Activated B cell treated with CpG ODN at 0.5 μM for 24 hours (primary cell): ENCODE measurements at regions of chr10 and their contacts with region 1.

Region 1: DNA sequence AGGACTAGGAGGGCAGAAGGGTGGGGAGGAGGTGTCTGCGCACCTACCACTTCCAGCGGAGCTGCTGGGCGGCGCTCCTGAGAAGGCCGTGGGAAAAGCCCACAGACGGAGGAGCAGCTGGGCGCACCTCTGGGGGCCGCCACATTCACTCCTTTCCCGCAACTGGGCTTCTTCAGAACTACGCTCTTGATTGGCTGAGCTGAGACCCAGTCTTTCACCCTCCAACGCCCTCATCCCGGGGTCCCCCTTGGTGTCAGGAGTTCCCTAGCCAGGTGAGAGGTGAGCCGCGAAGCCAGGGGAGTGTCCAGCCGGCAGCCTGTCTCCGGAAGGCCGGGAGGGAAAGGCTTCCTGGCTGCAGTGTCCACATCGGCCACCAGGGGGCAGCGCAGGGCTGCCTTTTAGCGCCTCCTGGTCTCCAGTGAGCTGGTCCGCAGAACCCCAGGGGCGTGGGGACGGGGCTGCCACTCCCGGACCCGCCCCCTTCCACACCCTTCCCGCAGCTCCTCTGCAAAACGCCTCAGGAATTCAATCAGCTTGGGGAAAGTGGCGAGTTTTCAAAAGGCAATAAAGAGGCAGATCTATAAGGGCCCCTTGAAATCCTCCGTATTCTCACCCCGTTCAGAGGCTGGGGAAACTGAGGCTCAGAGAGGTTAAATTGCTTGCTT is 98.8 kb downstream of the CHST15 start:
- DNase-seq: peak; percentile 89
- ATAC-seq: peak; percentile 85
- H3K4me3 Mint-ChIP-seq: peak overlapping the region; percentile 73
- H3K27ac Mint-ChIP-seq: no peak overlapping the region
- H3K4me1 Mint-ChIP-seq: peaks cover 42% of the 10 kb centered on the region
- H3K27me3 Mint-ChIP-seq: peaks cover 38% of the 10 kb centered on the region
- CTCF ChIP-seq: peak; percentile 91

Region 2: DNA sequence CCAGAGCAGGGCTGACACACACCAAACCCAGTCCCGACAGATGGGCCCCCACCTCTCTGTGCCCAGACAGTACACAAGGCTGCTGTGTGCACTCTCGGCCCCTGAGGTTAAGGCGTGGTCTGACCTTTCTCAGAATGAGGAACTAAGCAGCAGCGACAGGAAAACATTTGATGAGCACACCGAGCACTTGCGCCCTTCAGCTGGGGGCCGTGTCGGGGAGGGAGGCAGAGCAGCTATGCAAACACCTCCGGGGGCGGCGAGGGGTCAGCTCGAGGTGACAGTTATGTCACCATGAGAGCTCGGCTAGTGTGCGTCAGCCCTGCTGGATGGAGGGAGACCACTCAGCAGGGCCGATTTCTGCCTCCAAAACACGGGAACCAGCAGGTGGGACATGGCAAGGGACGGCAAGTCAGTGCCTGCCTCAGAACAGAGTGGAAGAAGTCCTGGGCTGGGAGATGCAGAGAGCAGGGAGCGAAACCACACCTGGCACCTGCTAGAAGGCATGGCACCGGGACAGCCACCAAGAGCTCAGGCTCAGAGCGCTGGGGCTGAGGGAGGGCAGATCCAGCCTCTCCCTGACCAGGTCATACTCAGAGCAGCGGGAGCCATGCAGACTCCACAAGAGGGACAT is 41.5 kb after region 1 on chr10:
- CTCF ChIA-PET with region 1: interaction called, 6 read pairs
- POLR2A ChIA-PET with region 1: no interaction called
- intact Hi-C with region 1: loop called (anchors 2 kb)
- DNase-seq: peak; percentile 75
- ATAC-seq: peak; percentile 93
- H3K4me3 Mint-ChIP-seq: peak overlapping the region; percentile 85
- H3K27ac Mint-ChIP-seq: peak overlapping the region; percentile 95
- H3K4me1 Mint-ChIP-seq: peaks cover 26% of the 10 kb centered on the region
- H3K27me3 Mint-ChIP-seq: no peaks in the 10 kb centered on the region
- CTCF ChIP-seq: no peak

Region 3: GRCh38 chr10:124152916-124153826 is 158.6 kb after region 1 on chr10:
- CTCF ChIA-PET with region 1: interaction called, 12 read pairs
- POLR2A ChIA-PET with region 1: no interaction called
- intact Hi-C with region 1: loop called (anchors 1 kb)
- DNase-seq: peak; percentile 28
- ATAC-seq: peak; percentile 68
- H3K4me3 Mint-ChIP-seq: no peak overlapping the region
- H3K27ac Mint-ChIP-seq: no peak overlapping the region
- H3K4me1 Mint-ChIP-seq: peaks cover 16% of the 10 kb centered on the region
- H3K27me3 Mint-ChIP-seq: no peaks in the 10 kb centered on the region
- CTCF ChIP-seq: no peak

Region 4: GRCh38 chr10:124259139-124259825 is 264.7 kb after region 1 on chr10:
- CTCF ChIA-PET with region 1: interaction called, 41 read pairs
- POLR2A ChIA-PET with region 1: no interaction called
- intact Hi-C with region 1: loop called (anchors 1 kb)
- DNase-seq: no peak
- ATAC-seq: no peak
- H3K4me3 Mint-ChIP-seq: no peak overlapping the region
- H3K27ac Mint-ChIP-seq: no peak overlapping the region
- H3K4me1 Mint-ChIP-seq: no peaks in the 10 kb centered on the region
- H3K27me3 Mint-ChIP-seq: no peaks in the 10 kb centered on the region
- CTCF ChIP-seq: no peak

Region 5: DNA sequence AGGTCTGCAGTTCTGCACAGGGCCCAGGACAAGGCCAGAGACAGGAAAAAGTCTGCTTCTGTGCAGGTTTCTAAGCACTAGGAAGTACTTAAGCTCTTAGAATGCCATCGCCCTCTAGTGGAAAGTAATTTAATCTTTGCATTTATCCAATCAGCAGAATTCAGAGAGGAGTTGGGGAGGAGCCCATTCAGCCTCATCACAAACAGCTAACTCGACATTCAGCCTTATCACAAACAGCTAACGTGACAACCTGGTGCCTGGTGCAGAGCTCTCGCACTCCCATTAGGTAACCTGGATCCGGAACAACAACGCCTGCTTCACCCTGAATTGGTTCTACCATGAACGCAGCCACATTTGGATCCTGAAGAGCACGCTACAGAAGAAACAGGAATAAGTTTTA is 409.0 kb after region 1 on chr10:
- CTCF ChIA-PET with region 1: interaction called, 55 read pairs
- POLR2A ChIA-PET with region 1: no interaction called
- intact Hi-C with region 1: loop called (anchors 1 kb)
- DNase-seq: no peak
- ATAC-seq: peak; percentile 100
- H3K4me3 Mint-ChIP-seq: no peak overlapping the region
- H3K27ac Mint-ChIP-seq: peak overlapping the region; percentile 59
- H3K4me1 Mint-ChIP-seq: peaks cover 9% of the 10 kb centered on the region
- H3K27me3 Mint-ChIP-seq: no peaks in the 10 kb centered on the region
- CTCF ChIP-seq: no peak

Region 6: GRCh38 chr10:124827474-124827873 is 832.9 kb after region 1 on chr10:
- CTCF ChIA-PET with region 1: no interaction called
- POLR2A ChIA-PET with region 1: no interaction called
- intact Hi-C with region 1: loop called (anchors 10 kb)
- DNase-seq: no peak
- ATAC-seq: no peak
- H3K4me3 Mint-ChIP-seq: no peak overlapping the region
- H3K27ac Mint-ChIP-seq: no peak overlapping the region
- H3K4me1 Mint-ChIP-seq: no peaks in the 10 kb centered on the region
- H3K27me3 Mint-ChIP-seq: no peaks in the 10 kb centered on the region
- CTCF ChIP-seq: no peak